ENCODE measurements at regions of chr17 and their contacts with region 1.

Region 1: GRCh38 chr17:55770148-55770870 is 19.5 kb downstream of the PCTP start:
- DNase-seq: no peak
- ATAC-seq: peak; percentile 81 to 88 (median 84)
- H3K4me3 ChIP-seq: no peak overlapping the region
- H3K27ac ChIP-seq: peak overlapping the region; percentile 65
- H3K4me1 ChIP-seq: peaks cover 9% of the 10 kb centered on the region
- H3K27me3 ChIP-seq: no peaks in the 10 kb centered on the region
- CTCF ChIP-seq: peak; percentile 72

Region 2: GRCh38 chr17:55259684-55260111 is 510.6 kb before region 1 on chr17:
- intact Hi-C with region 1: no loop called
- DNase-seq: no peak
- ATAC-seq: no peak
- H3K4me3 ChIP-seq: no peak overlapping the region
- H3K27ac ChIP-seq: peak overlapping the region; percentile 20
- H3K4me1 ChIP-seq: peaks cover 11% of the 10 kb centered on the region
- H3K27me3 ChIP-seq: no peaks in the 10 kb centered on the region
- CTCF ChIP-seq: no peak

Region 3: DNA sequence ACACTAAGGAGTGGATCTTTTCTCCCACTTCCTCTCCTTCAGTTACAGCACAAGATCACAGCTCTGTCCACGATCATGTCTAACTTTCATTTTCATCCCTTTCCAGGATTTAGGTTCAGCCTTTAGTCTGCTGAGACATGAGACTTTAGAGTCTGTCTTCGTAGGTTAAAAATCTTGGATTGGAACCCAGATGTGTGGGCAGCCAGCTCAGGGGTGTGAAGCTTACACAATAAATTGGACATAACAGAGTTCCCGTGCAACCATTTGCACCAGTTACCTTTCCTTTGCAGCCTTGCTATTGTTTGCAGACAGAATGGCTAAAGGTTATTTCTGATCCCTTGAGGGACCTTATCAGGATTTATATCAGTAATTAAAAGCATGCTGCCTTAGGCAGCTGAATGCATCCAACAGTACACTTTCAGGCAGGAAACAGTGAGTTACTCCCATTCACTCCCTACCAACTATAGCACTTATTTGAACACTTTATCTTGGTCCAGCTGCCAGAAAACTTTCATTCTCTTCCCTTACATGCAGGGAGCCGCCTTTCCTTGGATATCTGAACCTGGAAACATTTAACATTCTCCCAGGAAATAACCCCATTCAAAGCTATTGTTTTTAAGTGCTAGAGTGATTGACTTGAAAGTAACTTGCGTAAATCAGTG is 134.9 kb before region 1 on chr17:
- intact Hi-C with region 1: no loop called
- DNase-seq: no peak
- ATAC-seq: peak in 1 of 4 donors; percentile 23
- H3K4me3 ChIP-seq: peak overlapping the region; percentile 29
- H3K27ac ChIP-seq: peak overlapping the region; percentile 21
- H3K4me1 ChIP-seq: peaks cover 2% of the 10 kb centered on the region
- H3K27me3 ChIP-seq: no peaks in the 10 kb centered on the region
- CTCF ChIP-seq: no peak

Region 4: DNA sequence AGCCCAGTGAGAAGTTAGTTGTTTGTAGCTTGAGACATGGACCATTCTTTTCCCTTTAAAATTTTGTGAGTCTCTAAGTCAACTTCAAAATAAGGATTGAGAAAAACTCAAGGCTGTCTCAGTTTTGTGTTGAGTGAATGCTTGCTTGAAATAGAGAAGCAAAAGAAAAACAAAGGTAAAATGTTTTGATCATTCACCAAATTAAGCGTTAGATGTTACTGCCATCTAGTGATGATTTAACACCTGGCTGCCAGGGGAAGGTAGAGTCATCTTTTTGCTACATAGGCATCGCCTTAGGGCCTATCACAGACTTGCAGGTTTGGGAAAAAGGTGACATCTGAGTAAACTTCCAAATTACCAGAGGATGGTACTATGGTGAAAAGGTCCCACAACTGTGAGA is 54.9 kb after region 1 on chr17:
- intact Hi-C with region 1: loop called in 1 of 2 experiments (anchors 2 kb)
- DNase-seq: no peak
- ATAC-seq: peak in 3 of 4 donors; percentile 48 to 73 (median 57)
- H3K4me3 ChIP-seq: no peak overlapping the region
- H3K27ac ChIP-seq: no peak overlapping the region
- H3K4me1 ChIP-seq: no peaks in the 10 kb centered on the region
- H3K27me3 ChIP-seq: no peaks in the 10 kb centered on the region
- CTCF ChIP-seq: peak; percentile 51

Measured in psoas muscle (tissue), 8 donors.